ENCODE measurements at regions of chrX and their contacts with region 1.

Region 1: DNA sequence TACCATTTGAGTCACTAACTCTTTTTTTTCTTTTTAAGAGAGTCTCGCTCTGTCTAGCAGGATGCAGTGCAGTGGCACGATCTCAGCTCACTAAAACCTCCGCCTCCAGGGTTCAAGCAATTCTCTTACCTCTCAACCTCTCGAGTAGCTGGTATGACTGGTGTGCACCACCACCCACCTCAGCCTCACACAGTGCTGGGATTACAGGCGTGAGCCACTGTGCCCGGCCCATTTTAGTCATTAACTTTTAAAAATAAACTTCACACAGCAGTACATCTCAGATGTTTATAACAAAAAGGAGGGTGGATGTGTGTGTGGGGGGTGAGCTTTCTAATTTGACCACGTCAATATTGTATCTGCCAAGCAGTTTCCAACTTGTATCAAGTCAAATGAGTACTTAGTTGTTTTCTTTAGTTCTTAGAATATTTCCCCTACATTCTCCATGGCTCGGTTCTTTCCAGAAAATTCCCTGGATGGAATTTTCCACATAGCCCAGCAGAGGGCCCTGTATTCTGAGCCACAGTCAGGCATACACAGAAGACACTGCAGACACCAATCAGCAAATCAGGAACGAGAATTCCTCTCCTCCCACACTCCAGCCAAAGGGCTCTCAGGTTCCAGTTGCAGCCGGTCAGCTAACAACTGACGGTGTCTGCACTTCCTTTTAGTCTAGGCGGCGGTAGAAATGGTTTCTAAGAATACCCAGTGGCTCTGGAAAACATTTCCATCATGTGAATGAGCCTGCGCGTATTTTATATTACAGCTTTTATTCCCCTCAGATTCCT is 20.1 kb upstream of the ARAF start:
- DNase-seq: peak; percentile 92
- H3K4me3 ChIP-seq: peak overlapping the region; percentile 37; the same call in 1 of the 2 replicates
- H3K27ac ChIP-seq: peak overlapping the region; percentile 70
- H3K4me1 ChIP-seq: peaks cover 5% of the 10 kb centered on the region
- H3K27me3 ChIP-seq: no peaks in the 10 kb centered on the region

Region 2: GRCh38 chrX:48025561-48025960 is 484.6 kb after region 1 on chrX:
- in situ Hi-C with region 1: loop called (anchors 25 kb)
- DNase-seq: peak; percentile 62
- H3K4me3 ChIP-seq: no peak overlapping the region
- H3K27ac ChIP-seq: no peak overlapping the region
- H3K4me1 ChIP-seq: no peaks in the 10 kb centered on the region
- H3K27me3 ChIP-seq: no peaks in the 10 kb centered on the region

Region 3: DNA sequence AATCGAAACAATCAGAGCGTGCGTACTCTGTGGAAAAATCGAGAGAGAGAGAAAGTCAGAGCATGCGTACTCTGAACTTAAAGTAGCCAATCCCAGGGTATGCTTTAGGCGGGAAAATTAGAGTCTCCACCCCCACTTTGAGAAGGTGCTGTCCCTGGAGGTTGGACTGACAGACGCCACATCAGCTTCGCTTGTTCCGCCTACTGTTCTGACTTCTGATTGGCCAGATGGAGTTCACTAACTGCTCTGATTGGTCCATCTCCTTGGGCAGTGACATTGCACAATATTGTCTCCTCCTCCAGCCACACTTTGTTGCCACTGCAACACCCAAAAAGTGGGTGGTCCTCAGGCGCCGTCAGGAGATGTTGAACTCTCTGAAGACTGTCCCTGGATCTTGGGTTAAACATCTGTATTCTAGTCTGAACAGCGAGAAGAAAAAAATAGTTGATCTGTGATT is 655.8 kb after region 1 on chrX and contains the start of gene SSX5:
- in situ Hi-C with region 1: no loop called
- DNase-seq: no peak
- H3K4me3 ChIP-seq: no peak within 1 kb of the TSS
- H3K27ac ChIP-seq: no peak within 1 kb of the TSS
- H3K4me1 ChIP-seq: no peaks in the 10 kb centered on the region
- H3K27me3 ChIP-seq: no peaks in the 10 kb centered on the region
- total RNA-seq, gene SSX5: not detected in 2 replicates

Region 4: DNA sequence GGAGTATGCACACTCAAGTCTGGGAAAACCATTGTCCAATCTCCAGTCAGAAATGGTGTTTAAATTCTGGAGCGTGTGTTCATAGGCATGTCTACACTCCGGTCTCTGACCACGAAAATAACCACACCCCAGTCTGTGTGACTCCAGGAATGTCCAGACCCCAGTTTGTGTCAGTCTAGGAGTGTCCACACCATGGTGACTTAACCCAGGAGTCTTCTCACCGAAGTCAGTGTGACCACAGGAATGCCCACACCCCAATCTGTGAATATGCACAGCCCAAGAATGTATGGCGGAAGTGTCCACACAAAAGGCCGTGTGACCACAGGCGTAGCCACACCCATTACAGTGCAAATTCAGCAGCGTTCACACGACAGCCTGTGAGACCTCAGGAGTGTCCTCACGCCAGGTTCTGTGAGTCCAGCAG is 946.4 kb after region 1 on chrX:
- in situ Hi-C with region 1: no loop called
- DNase-seq: peak; percentile 85
- H3K4me3 ChIP-seq: no peak overlapping the region
- H3K27ac ChIP-seq: peak overlapping the region; percentile 85
- H3K4me1 ChIP-seq: peaks cover 12% of the 10 kb centered on the region
- H3K27me3 ChIP-seq: no peaks in the 10 kb centered on the region